Naive thymus-derived CD4-positive, alpha-beta T cell (primary cell): ENCODE measurements at regions of chr6 and their contacts with region 1.

Region 1: GRCh38 chr6:39934131-39934757 is at the start of gene MOCS1:
- DNase-seq: peak in 7 of 9 donors; percentile 15 to 30 (median 22)
- ATAC-seq: peak; percentile 77
- H3K4me3 ChIP-seq: peak within 1 kb of the TSS; percentile 42
- H3K4me3 Mint-ChIP-seq: peak within 1 kb of the TSS; percentile 80 to 95 (median 90)
- H3K27ac ChIP-seq: peak within 1 kb of the TSS; percentile 27
- H3K27ac Mint-ChIP-seq: peak within 1 kb of the TSS in 7 of 9 donors; percentile 66 to 93 (median 78)
- H3K4me1 ChIP-seq: peaks cover 0 to 7% of the 10 kb centered on the region in 2 donors
- H3K4me1 Mint-ChIP-seq: peaks cover 3 to 28% (median 24%) of the 10 kb centered on the region in 7 donors
- H3K27me3 ChIP-seq: no peaks in the 10 kb centered on the region
- H3K27me3 Mint-ChIP-seq: peaks cover 0 to 35% (median 7%) of the 10 kb centered on the region in 5 donors
- total RNA-seq, gene MOCS1: 0.56 to 3.0 (median 1.3) TPM

Region 2: GRCh38 chr6:39724787-39725631 is 209.2 kb before region 1 on chr6 and contains the start of gene KIF6:
- CTCF ChIA-PET with region 1: no interaction called
- POLR2A ChIA-PET with region 1: no interaction called
- intact Hi-C with region 1: loop called in 1 of 2 experiments (anchors 1 kb)
- DNase-seq: peak; percentile 50 to 85 (median 77)
- ATAC-seq: peak; percentile 99
- H3K4me3 ChIP-seq: peak within 1 kb of the TSS; percentile 68
- H3K4me3 Mint-ChIP-seq: peak within 1 kb of the TSS; percentile 92 to 98 (median 97)
- H3K27ac ChIP-seq: no peak within 1 kb of the TSS
- H3K27ac Mint-ChIP-seq: peak within 1 kb of the TSS; percentile 10 to 91 (median 72)
- H3K4me1 ChIP-seq: peaks cover 0 to 3% of the 10 kb centered on the region in 2 donors
- H3K4me1 Mint-ChIP-seq: peaks cover 0 to 9% (median 7%) of the 10 kb centered on the region in 7 donors
- H3K27me3 ChIP-seq: no peaks in the 10 kb centered on the region
- H3K27me3 Mint-ChIP-seq: peaks cover 0 to 6% (median 4%) of the 10 kb centered on the region in 5 donors
- total RNA-seq, gene KIF6: not detected

Region 3: GRCh38 chr6:39902786-39903465 is 31.3 kb before region 1 on chr6:
- CTCF ChIA-PET with region 1: no interaction called
- POLR2A ChIA-PET with region 1: no interaction called
- intact Hi-C with region 1: no loop called
- DNase-seq: no peak
- ATAC-seq: no peak
- H3K4me3 ChIP-seq: no peak overlapping the region
- H3K4me3 Mint-ChIP-seq: no peak overlapping the region
- H3K27ac ChIP-seq: no peak overlapping the region
- H3K27ac Mint-ChIP-seq: no peak overlapping the region
- H3K4me1 ChIP-seq: no peaks in the 10 kb centered on the region
- H3K4me1 Mint-ChIP-seq: no peaks in the 10 kb centered on the region
- H3K27me3 ChIP-seq: no peaks in the 10 kb centered on the region
- H3K27me3 Mint-ChIP-seq: peaks cover 0 to 8% (median 4%) of the 10 kb centered on the region in 5 donors